ENCODE measurements at regions of chr16 and their contacts with region 1.

Region 1: DNA sequence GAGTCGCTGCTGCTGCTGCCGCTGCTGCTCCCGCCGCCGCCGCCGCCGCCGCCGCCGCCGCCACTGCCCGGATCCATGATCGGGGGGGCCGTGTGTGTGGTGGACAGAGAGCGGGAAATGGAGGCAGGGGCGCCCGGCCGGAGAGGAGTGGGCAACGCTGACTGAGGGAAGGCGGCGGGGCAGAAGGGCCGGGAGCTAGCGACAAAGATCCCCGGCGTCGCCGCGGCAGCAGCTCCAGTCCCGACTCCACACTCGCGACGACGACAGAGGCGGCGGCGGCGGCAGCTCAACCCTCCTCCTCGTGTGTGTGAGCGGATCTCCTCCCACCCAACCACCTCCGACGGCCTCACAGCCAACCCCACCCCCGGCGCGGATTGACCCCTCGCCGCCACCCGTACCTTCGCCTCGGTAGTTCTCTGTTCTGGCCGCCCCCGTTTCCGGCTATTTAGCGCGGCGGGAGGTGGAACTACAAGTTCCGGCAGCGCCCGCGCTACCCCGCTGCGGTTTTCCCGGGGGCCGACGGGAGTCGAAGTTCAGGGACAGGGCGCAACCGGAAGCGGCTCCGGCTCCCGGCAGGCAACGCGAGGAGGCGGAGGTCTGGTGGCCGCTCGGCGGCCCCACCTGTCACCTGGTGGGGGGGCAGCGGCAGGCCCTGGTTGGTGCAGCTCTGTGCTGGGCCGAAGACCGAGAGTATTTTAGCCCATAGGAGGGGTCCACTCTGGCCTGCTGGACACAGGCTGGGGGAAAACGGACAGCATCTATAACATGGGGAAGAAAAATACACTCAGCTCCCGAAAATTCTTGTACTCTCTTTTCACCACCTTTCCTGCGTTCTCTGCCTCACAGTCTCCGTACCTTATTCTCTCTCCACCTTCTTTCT is at the start of gene GSPT1:
- DNase-seq: peak; percentile 100
- H3K4me3 Mint-ChIP-seq: peak within 1 kb of the TSS; percentile 95
- H3K27ac Mint-ChIP-seq: peak within 1 kb of the TSS; percentile 97
- H3K4me1 Mint-ChIP-seq: peaks cover 33% of the 10 kb centered on the region
- H3K27me3 Mint-ChIP-seq: peaks cover 11% of the 10 kb centered on the region
- total RNA-seq, gene GSPT1: 212 and 224 TPM in 2 replicates

Region 2: GRCh38 chr16:10944249-10945064 is 971.4 kb before region 1 on chr16 and contains the start of gene CLEC16A:
- intact Hi-C with region 1: loop called (anchors 5 kb)
- DNase-seq: peak; percentile 99
- H3K4me3 Mint-ChIP-seq: peak within 1 kb of the TSS; percentile 84
- H3K27ac Mint-ChIP-seq: peak within 1 kb of the TSS; percentile 79
- H3K4me1 Mint-ChIP-seq: peaks cover 56% of the 10 kb centered on the region
- H3K27me3 Mint-ChIP-seq: no peaks in the 10 kb centered on the region
- total RNA-seq, gene CLEC16A: 35.9 and 36.2 TPM in 2 replicates

Region 3: GRCh38 chr16:11742539-11743307 is 173.2 kb before region 1 on chr16 and contains the start of gene TXNDC11:
- intact Hi-C with region 1: loop called (anchors 2 kb)
- DNase-seq: peak; percentile 100
- H3K4me3 Mint-ChIP-seq: peak within 1 kb of the TSS; percentile 98
- H3K27ac Mint-ChIP-seq: peak within 1 kb of the TSS; percentile 97
- H3K4me1 Mint-ChIP-seq: peaks cover 48% of the 10 kb centered on the region
- H3K27me3 Mint-ChIP-seq: no peaks in the 10 kb centered on the region
- total RNA-seq, gene TXNDC11: 41.7 and 43.6 TPM in 2 replicates

Region 4: DNA sequence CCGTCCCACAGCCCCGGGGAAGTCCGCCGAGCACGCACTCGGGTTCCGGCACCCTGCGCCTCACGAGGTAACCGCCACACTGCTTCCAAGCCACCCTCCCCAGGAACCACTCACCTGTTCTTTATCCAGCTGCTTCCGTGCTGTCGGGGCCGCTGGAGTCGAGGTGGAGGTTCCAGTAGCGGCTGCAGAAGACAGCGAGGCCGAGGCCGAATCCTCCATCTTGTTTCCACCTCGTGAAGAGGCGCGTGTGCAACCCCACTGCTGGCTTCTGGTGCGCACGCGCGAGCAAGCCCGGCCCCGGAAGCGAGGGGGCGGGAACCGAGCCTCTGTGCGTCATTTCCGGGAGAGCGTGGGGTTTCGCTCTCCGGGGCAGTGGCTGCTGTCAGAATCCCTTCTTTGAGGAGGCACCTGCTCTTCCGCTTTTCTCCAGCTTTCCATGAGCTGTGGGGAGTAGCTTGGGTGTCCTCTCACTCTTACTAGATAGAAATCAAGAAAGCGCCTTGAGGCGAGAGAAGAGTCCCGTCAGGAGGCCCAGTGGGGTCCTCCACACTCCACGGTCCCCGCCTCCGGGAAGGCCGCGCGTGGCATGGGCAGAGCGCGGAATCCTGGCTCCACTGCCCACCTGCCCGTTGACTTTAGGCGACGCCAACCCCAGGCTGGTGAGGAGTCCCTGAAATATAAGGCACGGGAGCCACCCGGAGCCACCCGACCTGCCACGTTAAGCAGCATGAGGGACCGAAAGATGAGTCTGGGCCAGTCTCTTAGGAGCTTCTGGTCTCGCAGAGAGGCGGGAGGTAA is 64.4 kb before region 1 on chr16 and contains the start of gene RSL1D1:
- intact Hi-C with region 1: loop called (anchors 1 kb)
- DNase-seq: peak; percentile 99
- H3K4me3 Mint-ChIP-seq: peak within 1 kb of the TSS; percentile 99
- H3K27ac Mint-ChIP-seq: peak within 1 kb of the TSS; percentile 98
- H3K4me1 Mint-ChIP-seq: peaks cover 47% of the 10 kb centered on the region
- H3K27me3 Mint-ChIP-seq: no peaks in the 10 kb centered on the region
- total RNA-seq, gene RSL1D1: 375 and 379 TPM in 2 replicates

Region 5: DNA sequence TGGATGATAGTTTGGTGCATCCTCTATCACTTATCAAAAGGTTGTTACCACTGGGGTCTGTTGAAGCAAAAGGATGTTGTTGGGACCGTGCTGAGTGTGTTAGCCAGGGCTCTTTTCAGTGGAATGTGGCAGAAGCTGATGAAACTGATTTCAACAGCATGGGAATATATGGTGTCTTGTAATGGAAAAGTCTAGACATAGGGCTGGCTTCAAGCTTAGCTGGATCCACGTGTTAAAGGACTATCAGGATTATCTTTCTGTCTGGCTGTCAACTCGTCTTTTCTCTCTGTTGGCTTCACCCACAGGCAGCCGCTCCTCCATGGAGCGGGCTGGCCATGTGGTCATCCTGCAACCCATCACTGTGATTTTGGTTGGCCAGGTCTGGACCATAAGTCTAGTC is 69.4 kb after region 1 on chr16:
- intact Hi-C with region 1: no loop called
- DNase-seq: no peak
- H3K4me3 Mint-ChIP-seq: no peak overlapping the region
- H3K27ac Mint-ChIP-seq: no peak overlapping the region
- H3K4me1 Mint-ChIP-seq: peaks cover 2% of the 10 kb centered on the region
- H3K27me3 Mint-ChIP-seq: no peaks in the 10 kb centered on the region

Region 6: DNA sequence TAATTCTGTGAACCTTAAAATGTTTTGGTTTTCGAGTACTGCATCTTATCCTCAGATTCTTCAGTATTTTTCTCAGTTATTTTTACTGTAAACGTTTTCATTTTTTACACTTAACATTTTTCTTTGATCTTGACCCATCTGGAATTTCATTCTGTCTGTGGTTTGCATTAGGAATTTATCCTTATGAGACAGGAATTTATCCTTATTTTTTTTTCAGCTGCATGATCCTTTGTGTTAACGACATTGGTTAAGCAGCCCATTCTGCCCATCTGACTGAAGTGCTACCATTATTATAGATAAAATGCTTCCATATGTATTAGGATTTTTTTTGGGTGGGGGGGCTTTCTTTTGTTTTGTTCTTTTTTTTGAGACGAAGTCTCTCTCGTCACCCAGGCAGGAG is 101.7 kb after region 1 on chr16:
- intact Hi-C with region 1: no loop called
- DNase-seq: no peak
- H3K4me3 Mint-ChIP-seq: no peak overlapping the region
- H3K27ac Mint-ChIP-seq: no peak overlapping the region
- H3K4me1 Mint-ChIP-seq: peaks cover 2% of the 10 kb centered on the region
- H3K27me3 Mint-ChIP-seq: no peaks in the 10 kb centered on the region

Region 7: DNA sequence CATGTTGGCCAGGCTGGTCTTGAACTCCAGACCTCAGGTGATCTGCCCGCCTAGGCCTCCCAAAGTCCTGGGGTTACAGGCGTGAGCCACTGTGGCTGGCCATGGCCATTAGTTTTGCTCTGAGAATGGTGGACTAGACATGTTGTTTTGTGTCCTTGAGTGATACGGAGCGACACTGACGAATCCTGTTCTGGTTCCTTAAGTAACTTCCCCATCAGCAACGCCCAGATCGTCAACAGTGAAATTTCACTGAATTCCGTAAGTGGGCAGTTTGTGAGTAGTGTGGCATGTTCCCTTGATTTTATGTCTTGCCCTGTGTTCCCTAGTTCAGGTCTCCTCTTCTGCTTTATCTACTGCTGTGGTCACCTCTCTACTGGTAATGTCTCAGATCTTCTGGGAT is 128.1 kb after region 1 on chr16:
- intact Hi-C with region 1: no loop called
- DNase-seq: no peak
- H3K4me3 Mint-ChIP-seq: no peak overlapping the region
- H3K27ac Mint-ChIP-seq: no peak overlapping the region
- H3K4me1 Mint-ChIP-seq: no peaks in the 10 kb centered on the region
- H3K27me3 Mint-ChIP-seq: no peaks in the 10 kb centered on the region

Region 8: GRCh38 chr16:12067714-12068401 is 152.0 kb after region 1 on chr16:
- intact Hi-C with region 1: loop called (anchors 10 kb)
- DNase-seq: peak; percentile 89
- H3K4me3 Mint-ChIP-seq: no peak overlapping the region
- H3K27ac Mint-ChIP-seq: no peak overlapping the region
- H3K4me1 Mint-ChIP-seq: peaks cover 2% of the 10 kb centered on the region
- H3K27me3 Mint-ChIP-seq: no peaks in the 10 kb centered on the region